Activated CD4-positive, alpha-beta T cell treated with anti-CD3 and anti-CD28 coated beads, Interleukin-2, amount 10 ng/mL, durations not matched to agents 24 days and 14 days (primary cell): ENCODE measurements at regions of chr10 and their contacts with region 1.

Region 1: GRCh38 chr10:91163269-91163868 is 57.1 kb upstream of the PCGF5 start:
- DNase-seq: peak; percentile 92
- H3K4me3 Mint-ChIP-seq: peak overlapping the region; percentile 89
- H3K27ac Mint-ChIP-seq: peak overlapping the region; percentile 92
- H3K4me1 Mint-ChIP-seq: peaks cover 33% of the 10 kb centered on the region
- H3K27me3 Mint-ChIP-seq: peaks cover 6% of the 10 kb centered on the region

Region 2: DNA sequence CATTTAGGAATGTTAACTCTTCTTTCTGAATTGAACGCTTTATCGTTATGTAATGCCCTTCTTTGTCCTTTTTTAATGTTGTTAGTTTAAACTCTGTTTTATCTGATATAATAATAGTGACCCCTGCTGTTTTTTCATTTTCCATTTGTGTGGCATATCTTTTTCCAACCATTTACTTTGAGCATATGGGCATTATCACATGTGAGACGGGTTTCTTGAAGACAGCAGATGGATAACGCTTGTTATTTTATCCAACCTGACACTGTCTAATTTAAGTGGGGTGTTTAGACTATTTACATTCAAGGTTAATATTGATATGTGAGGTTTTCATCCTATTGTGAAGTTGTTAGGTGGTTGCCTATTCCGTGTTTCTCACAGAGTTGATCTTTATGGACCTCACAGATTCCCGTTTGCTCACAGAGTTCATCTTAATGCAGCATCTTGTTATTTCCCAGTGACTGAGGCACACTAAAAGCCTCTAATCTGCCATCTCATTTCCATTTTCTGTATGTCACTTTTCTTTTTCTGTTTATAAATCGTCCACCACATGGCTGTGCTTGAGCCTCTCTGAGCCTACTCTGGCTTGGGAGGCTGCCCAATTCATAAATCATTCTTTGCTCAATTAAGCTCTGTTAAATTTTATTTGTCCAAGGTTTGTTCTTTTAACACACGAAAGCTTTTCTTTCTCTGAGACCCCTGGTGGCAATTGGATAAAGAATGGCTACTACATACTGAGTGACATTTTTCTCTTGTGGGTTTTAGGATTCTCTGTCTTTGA is 591.7 kb before region 1 on chr10:
- intact Hi-C with region 1: no loop called
- DNase-seq: no peak
- H3K4me3 Mint-ChIP-seq: no peak overlapping the region
- H3K27ac Mint-ChIP-seq: no peak overlapping the region
- H3K4me1 Mint-ChIP-seq: no peaks in the 10 kb centered on the region
- H3K27me3 Mint-ChIP-seq: no peaks in the 10 kb centered on the region

Region 3: DNA sequence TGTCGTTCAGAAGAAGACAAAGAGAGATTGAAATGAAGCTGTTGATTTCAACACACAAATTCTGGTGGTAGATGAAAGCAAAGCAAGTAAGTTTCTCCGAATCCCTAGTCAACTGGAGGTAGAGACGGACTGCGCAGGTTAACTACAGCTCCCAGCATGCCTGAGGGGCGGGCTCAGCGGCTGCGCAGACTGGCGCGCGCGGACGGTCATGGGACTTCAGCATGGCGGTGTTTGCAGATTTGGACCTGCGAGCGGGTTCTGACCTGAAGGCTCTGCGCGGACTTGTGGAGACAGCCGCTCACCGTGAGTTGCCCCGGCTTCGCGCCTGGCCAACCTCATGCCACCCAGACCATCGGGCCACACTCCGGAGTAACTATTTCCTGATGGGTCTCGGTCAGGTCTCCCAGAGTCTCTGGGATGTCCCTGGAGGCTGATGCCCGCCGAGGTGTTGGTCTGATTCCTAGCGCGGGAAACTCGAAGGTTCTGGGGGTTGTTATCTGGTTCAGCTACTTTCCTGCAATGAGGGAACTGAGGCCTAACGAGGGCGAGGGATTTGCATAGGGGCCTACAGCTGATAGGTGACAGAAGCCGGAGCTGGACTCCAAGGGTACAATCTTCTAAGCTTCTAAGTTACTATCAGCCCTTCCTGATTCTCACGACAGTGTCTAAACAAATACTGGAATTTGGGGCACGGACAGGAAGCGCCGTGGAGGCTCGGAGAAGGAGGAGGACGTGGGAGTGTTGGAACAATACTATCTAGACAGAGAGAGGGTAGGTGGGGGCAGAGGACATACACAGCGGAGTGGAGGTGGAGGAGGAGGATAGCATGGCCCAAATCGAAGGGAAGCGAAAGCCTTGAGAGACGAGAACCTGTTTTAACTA is 291.4 kb before region 1 on chr10 and contains the start of gene RPP30:
- intact Hi-C with region 1: loop called (anchors 10 kb)
- DNase-seq: peak; percentile 96
- H3K4me3 Mint-ChIP-seq: peak within 1 kb of the TSS; percentile 97
- H3K27ac Mint-ChIP-seq: peak within 1 kb of the TSS; percentile 96
- H3K4me1 Mint-ChIP-seq: peaks cover 32% of the 10 kb centered on the region
- H3K27me3 Mint-ChIP-seq: peaks cover 25% of the 10 kb centered on the region
- total RNA-seq, gene RPP30: 86.4 and 86.9 TPM in 2 replicates

Region 4: GRCh38 chr10:91088300-91089140 is 74.8 kb before region 1 on chr10:
- intact Hi-C with region 1: loop called (anchors 2 kb)
- DNase-seq: no peak
- H3K4me3 Mint-ChIP-seq: no peak overlapping the region
- H3K27ac Mint-ChIP-seq: no peak overlapping the region
- H3K4me1 Mint-ChIP-seq: no peaks in the 10 kb centered on the region
- H3K27me3 Mint-ChIP-seq: peaks cover 19% of the 10 kb centered on the region

Region 5: GRCh38 chr10:91220194-91220953 is 57.0 kb after region 1 on chr10 and contains the start of gene PCGF5:
- intact Hi-C with region 1: loop called (anchors 1 kb)
- DNase-seq: peak; percentile 97
- H3K4me3 Mint-ChIP-seq: peak within 1 kb of the TSS; percentile 96
- H3K27ac Mint-ChIP-seq: peak within 1 kb of the TSS; percentile 87
- H3K4me1 Mint-ChIP-seq: peaks cover 46% of the 10 kb centered on the region
- H3K27me3 Mint-ChIP-seq: no peaks in the 10 kb centered on the region
- total RNA-seq, gene PCGF5: 42.1 and 45.4 TPM in 2 replicates

Region 6: DNA sequence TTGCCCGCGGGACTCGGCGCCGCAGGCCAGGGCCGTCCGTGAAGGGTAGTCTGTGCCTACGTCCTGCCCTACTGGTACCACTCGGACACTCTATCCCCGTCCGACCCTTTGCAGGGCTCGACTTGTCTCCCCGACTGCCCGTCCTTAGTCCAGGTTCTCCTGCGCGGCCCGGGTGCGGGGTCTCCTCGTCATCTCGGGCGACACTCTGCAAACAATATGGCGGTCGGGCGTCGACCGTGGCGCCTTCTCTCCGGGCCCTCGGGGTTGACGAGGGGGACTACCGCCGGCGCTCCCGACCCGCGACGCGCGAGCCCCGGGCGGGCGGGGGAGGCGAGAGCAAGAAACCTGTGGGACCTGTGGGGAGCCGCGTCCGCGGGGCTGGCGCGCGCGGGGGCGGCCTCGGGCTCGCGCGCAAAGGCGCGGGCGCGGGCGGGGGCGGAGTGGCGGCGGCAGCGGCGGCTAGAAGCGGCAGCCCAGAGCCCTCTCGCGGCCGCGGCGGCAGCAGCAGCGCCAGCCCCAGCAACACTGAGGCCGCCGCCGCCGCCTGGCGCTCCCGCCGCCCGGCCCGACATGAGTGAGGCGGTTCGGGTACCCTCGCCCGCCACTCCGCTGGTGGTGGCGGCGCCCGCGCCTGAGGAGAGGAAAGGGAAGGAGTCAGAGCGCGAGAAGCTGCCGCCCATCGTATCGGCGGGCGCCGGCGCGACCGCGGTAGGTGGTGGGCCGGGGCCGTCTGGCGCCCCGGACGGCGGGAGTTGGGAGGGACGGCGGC is 246.7 kb after region 1 on chr10 and contains the start of gene HECTD2:
- intact Hi-C with region 1: loop called (anchors 10 kb)
- DNase-seq: peak; percentile 94
- H3K4me3 Mint-ChIP-seq: peak within 1 kb of the TSS; percentile 93
- H3K27ac Mint-ChIP-seq: peak within 1 kb of the TSS; percentile 96
- H3K4me1 Mint-ChIP-seq: peaks cover 17% of the 10 kb centered on the region
- H3K27me3 Mint-ChIP-seq: peaks cover 25% of the 10 kb centered on the region
- total RNA-seq, gene HECTD2: 4.5 and 5.5 TPM in 2 replicates